Caco-2 (cell line): ENCODE measurements at regions of chr2 and their contacts with region 1.

Region 1: GRCh38 chr2:163182764-163183354 is 344.3 kb upstream of the KCNH7 start:
- DNase-seq: no peak
- H3K4me3 ChIP-seq: no peak overlapping the region
- H3K4me3 Mint-ChIP-seq: no peak overlapping the region
- H3K27ac Mint-ChIP-seq: no peak overlapping the region
- H3K4me1 ChIP-seq: no peaks in the 10 kb centered on the region
- H3K4me1 Mint-ChIP-seq: no peaks in the 10 kb centered on the region
- H3K27me3 ChIP-seq: no peaks in the 10 kb centered on the region
- H3K27me3 Mint-ChIP-seq: no peaks in the 10 kb centered on the region
- CTCF ChIP-seq: peak; percentile 50 to 59

Region 2: DNA sequence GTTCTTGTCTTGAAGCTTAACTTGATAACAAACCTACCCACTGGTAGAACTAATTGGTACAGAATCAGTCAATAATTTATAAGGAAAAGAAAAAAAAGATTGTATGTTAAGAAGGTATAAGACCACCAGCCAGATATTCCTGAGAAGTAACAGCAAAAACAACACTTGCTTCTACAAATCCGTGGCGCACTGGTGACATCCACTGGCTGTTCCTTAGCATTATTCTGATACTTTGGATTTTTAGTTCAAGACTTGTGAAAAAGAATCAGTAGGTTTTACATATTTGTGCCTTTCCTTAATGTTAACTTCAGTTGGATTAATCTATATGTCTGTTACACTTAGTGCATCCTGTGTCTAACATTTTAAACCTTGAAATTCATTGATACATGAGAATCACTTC is 1296.6 kb after region 1 on chr2:
- CTCF ChIA-PET with region 1: no interaction called
- POLR2A ChIA-PET with region 1: no interaction called
- intact Hi-C with region 1: loop called (anchors 2 kb)
- DNase-seq: peak; percentile 33 to 43
- H3K4me3 ChIP-seq: no peak overlapping the region
- H3K4me3 Mint-ChIP-seq: no peak overlapping the region
- H3K27ac Mint-ChIP-seq: no peak overlapping the region
- H3K4me1 ChIP-seq: peaks cover 4% of the 10 kb centered on the region; the same call in 1 of the 2 replicates
- H3K4me1 Mint-ChIP-seq: no peaks in the 10 kb centered on the region
- H3K27me3 ChIP-seq: no peaks in the 10 kb centered on the region
- H3K27me3 Mint-ChIP-seq: no peaks in the 10 kb centered on the region
- CTCF ChIP-seq: peak; percentile 47 to 49